Caco-2 (cell line): ENCODE measurements at regions of chr7 and their contacts with region 1.

Region 1: GRCh38 chr7:17769918-17770317 is 170.4 kb downstream of the SNX13 start:
- DNase-seq: peak; percentile 73 to 78
- H3K4me3 ChIP-seq: no peak overlapping the region
- H3K4me3 Mint-ChIP-seq: no peak overlapping the region
- H3K27ac Mint-ChIP-seq: no peak overlapping the region
- H3K4me1 ChIP-seq: peaks cover 8% of the 10 kb centered on the region
- H3K4me1 Mint-ChIP-seq: no peaks in the 10 kb centered on the region
- H3K27me3 ChIP-seq: no peaks in the 10 kb centered on the region
- H3K27me3 Mint-ChIP-seq: no peaks in the 10 kb centered on the region
- CTCF ChIP-seq: peak; percentile 70 to 88

Region 2: GRCh38 chr7:17706734-17707133 is 63.2 kb before region 1 on chr7:
- CTCF ChIA-PET with region 1: interaction called, 14 read pairs
- POLR2A ChIA-PET with region 1: no interaction called
- intact Hi-C with region 1: loop called (anchors 1 kb)
- DNase-seq: peak; percentile 63 to 68
- H3K4me3 ChIP-seq: no peak overlapping the region
- H3K4me3 Mint-ChIP-seq: no peak overlapping the region
- H3K27ac Mint-ChIP-seq: no peak overlapping the region
- H3K4me1 ChIP-seq: no peaks in the 10 kb centered on the region
- H3K4me1 Mint-ChIP-seq: no peaks in the 10 kb centered on the region
- H3K27me3 ChIP-seq: peaks cover 1% of the 10 kb centered on the region; the same call in 1 of the 2 replicates
- H3K27me3 Mint-ChIP-seq: peaks cover 5% of the 10 kb centered on the region
- CTCF ChIP-seq: peak; percentile 78 to 80

Region 3: GRCh38 chr7:17940302-17940883 is 170.5 kb after region 1 on chr7 and contains the start of gene SNX13:
- CTCF ChIA-PET with region 1: no interaction called
- POLR2A ChIA-PET with region 1: no interaction called
- intact Hi-C with region 1: loop called (anchors 1 kb)
- DNase-seq: peak; percentile 95 to 96
- H3K4me3 ChIP-seq: peak within 1 kb of the TSS; percentile 99
- H3K4me3 Mint-ChIP-seq: peak within 1 kb of the TSS; percentile 100
- H3K27ac Mint-ChIP-seq: peak within 1 kb of the TSS; percentile 100
- H3K4me1 ChIP-seq: 0 out of 2 replicates have a peak, but pooled peaks cover 8% of the 10 kb centered on the region
- H3K4me1 Mint-ChIP-seq: peaks cover 24% of the 10 kb centered on the region
- H3K27me3 ChIP-seq: no peaks in the 10 kb centered on the region
- H3K27me3 Mint-ChIP-seq: no peaks in the 10 kb centered on the region
- CTCF ChIP-seq: peak; percentile 25 to 27
- total RNA-seq, gene SNX13: 36.6 and 41.8 TPM in 2 replicates

Region 4: DNA sequence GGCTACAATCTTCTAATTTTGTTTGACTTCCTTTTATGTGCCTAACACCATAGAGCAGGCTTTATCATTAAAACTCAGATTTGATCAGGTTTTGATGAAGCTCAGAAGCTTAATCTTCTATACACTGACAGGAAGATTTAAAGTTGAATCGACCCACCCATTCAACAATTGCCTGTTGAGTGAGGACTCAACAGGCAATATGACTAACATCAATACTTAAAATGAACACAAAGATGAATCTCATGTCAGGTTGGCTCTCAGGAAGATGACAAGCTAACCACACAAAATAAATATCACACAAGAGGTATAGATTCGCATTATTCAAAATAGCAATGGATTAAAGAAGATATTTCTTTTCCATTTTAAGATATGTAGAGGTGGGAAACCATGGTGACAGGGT is 207.0 kb after region 1 on chr7:
- CTCF ChIA-PET with region 1: no interaction called
- POLR2A ChIA-PET with region 1: no interaction called
- intact Hi-C with region 1: no loop called
- DNase-seq: no peak
- H3K4me3 ChIP-seq: no peak overlapping the region
- H3K4me3 Mint-ChIP-seq: no peak overlapping the region
- H3K27ac Mint-ChIP-seq: no peak overlapping the region
- H3K4me1 ChIP-seq: no peaks in the 10 kb centered on the region
- H3K4me1 Mint-ChIP-seq: no peaks in the 10 kb centered on the region
- H3K27me3 ChIP-seq: no peaks in the 10 kb centered on the region
- H3K27me3 Mint-ChIP-seq: no peaks in the 10 kb centered on the region
- CTCF ChIP-seq: no peak

Region 5: DNA sequence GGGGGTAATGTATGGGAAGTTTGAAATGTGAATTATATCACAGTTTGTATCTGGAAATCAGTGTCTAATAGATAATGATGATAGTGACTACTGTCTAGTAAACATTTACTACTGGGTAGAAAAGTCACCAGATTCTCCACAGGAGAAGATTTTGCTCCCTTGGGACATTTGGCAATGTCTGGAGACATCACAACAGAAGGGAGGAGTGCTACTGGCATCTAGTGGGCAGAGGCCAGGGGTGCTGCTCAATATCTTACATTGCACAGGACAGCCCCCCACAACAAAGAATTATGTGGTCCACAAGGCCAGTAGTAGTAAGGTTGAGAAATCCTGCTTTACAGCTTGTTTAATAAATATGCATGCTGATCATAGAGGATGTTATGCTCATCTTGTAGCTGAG is 350.1 kb after region 1 on chr7:
- CTCF ChIA-PET with region 1: no interaction called
- POLR2A ChIA-PET with region 1: no interaction called
- intact Hi-C with region 1: loop called (anchors 5 kb)
- DNase-seq: no peak
- H3K4me3 ChIP-seq: no peak overlapping the region
- H3K4me3 Mint-ChIP-seq: no peak overlapping the region
- H3K27ac Mint-ChIP-seq: no peak overlapping the region
- H3K4me1 ChIP-seq: no peaks in the 10 kb centered on the region
- H3K4me1 Mint-ChIP-seq: no peaks in the 10 kb centered on the region
- H3K27me3 ChIP-seq: no peaks in the 10 kb centered on the region
- H3K27me3 Mint-ChIP-seq: peaks cover 5% of the 10 kb centered on the region
- CTCF ChIP-seq: peak; percentile 14 to 17

Region 6: GRCh38 chr7:18320971-18321567 is 551.2 kb after region 1 on chr7:
- CTCF ChIA-PET with region 1: interaction called, 4 read pairs
- POLR2A ChIA-PET with region 1: no interaction called
- intact Hi-C with region 1: loop called (anchors 1 kb)
- DNase-seq: peak in 1 of 2 experiments; percentile 28
- H3K4me3 ChIP-seq: no peak overlapping the region
- H3K4me3 Mint-ChIP-seq: no peak overlapping the region
- H3K27ac Mint-ChIP-seq: no peak overlapping the region
- H3K4me1 ChIP-seq: no peaks in the 10 kb centered on the region
- H3K4me1 Mint-ChIP-seq: no peaks in the 10 kb centered on the region
- H3K27me3 ChIP-seq: no peaks in the 10 kb centered on the region; the same call in 1 of the 2 replicates
- H3K27me3 Mint-ChIP-seq: peaks cover 7% of the 10 kb centered on the region
- CTCF ChIP-seq: peak; percentile 45 to 73